PC-9 (cell line): ENCODE measurements at regions of chr1 and their contacts with region 1.

Region 1: GRCh38 chr1:92310185-92310597 is 11.3 kb downstream of the RPAP2 start:
- DNase-seq: peak in 1 of 2 experiments; percentile 45
- H3K4me3 ChIP-seq: no peak overlapping the region
- H3K27ac ChIP-seq: no peak overlapping the region
- H3K4me1 ChIP-seq: no peaks in the 10 kb centered on the region
- H3K27me3 ChIP-seq: no peaks in the 10 kb centered on the region
- CTCF ChIP-seq: peak; percentile 92

Region 2: GRCh38 chr1:92599184-92599583 is 289.0 kb after region 1 on chr1:
- CTCF ChIA-PET with region 1: no interaction called
- POLR2A ChIA-PET with region 1: no interaction called
- intact Hi-C with region 1: loop called (anchors 1 kb)
- DNase-seq: peak in 1 of 2 experiments; percentile 50
- H3K4me3 ChIP-seq: no peak overlapping the region
- H3K27ac ChIP-seq: no peak overlapping the region
- H3K4me1 ChIP-seq: no peaks in the 10 kb centered on the region
- H3K27me3 ChIP-seq: no peaks in the 10 kb centered on the region
- CTCF ChIP-seq: peak; percentile 72

Region 3: DNA sequence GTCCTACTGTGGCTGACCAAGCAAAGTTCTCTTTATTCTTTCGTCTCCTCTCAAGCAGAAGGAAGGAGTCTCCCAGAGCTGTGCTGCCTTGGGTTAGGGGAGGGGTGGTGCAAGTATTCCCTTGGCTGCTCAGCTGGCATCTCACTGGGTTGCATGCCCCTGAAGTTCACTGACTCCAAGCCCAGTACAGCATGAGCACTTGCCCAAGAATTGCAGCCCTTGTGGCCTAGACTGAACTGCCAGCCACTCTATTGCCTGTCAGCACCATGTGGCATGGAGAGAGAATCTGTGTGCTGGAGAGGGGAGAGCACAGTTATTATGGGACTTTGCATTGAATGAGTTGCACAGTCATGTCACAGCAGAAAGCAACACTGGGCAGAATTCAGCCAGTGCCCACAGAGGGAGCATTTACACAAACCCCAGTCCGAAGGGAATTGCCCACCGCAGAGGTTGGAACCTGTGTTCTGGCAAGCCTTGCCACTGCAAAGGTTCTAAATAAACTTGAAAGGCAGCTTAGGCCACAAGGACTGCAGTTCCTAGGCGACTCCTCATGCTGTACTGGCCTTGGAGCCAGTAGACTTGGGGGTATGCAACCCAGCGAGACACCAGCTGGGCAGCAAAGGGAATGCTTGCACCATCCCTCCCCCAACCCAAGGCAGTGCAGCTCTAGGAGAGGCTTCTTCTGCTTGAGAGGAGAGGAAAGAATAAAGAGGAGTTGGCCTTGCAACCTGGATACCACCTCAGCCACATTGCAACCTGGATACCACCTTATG is 1064.3 kb after region 1 on chr1:
- CTCF ChIA-PET with region 1: interaction called, 11 read pairs
- POLR2A ChIA-PET with region 1: no interaction called
- intact Hi-C with region 1: no loop called
- DNase-seq: peak in 1 of 2 experiments; percentile 19
- H3K4me3 ChIP-seq: no peak overlapping the region
- H3K27ac ChIP-seq: no peak overlapping the region
- H3K4me1 ChIP-seq: no peaks in the 10 kb centered on the region
- H3K27me3 ChIP-seq: no peaks in the 10 kb centered on the region
- CTCF ChIP-seq: no peak